AG04450 (cell line): ENCODE measurements at regions of chr12 and their contacts with region 1.

Region 1: DNA sequence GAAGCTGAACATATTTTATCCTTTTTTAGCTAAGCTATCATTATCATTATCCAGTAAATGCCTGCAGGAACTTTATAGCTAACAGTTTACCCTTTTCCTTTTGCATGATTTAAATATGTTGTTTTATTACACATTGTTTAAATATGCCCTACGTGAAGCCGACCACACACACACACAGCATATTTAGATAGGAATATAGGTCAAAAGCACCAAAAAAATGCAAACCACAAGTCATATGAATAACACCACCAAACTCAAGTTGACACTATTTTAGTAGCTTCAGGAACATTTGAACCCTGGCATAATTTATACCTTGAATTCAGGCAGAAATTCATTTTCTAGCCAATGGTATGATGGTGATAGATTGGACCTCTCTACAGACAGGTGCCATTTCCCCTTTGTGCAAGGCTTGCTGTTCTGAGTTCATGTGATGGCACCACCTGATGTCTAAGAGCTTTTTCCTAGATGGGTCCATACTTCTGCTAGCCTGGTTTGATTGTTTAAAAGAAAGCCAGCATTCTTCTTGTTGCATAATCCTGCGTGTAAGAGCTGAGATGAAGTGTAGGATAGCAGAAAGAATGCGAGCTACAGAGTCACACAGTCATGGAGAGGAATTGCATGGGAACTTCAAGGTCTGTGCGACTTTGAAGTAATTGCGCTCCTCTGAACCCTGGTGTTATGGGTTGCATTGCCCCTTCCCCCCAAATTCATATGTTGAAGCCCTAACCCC is 454.8 kb upstream of the SOX5 start:
- DNase-seq: peak; percentile 52
- H3K4me3 ChIP-seq: no peak overlapping the region
- H3K27ac ChIP-seq: peak overlapping the region; percentile 43
- H3K27me3 ChIP-seq: no peaks in the 10 kb centered on the region
- CTCF ChIP-seq: no peak

Region 2: DNA sequence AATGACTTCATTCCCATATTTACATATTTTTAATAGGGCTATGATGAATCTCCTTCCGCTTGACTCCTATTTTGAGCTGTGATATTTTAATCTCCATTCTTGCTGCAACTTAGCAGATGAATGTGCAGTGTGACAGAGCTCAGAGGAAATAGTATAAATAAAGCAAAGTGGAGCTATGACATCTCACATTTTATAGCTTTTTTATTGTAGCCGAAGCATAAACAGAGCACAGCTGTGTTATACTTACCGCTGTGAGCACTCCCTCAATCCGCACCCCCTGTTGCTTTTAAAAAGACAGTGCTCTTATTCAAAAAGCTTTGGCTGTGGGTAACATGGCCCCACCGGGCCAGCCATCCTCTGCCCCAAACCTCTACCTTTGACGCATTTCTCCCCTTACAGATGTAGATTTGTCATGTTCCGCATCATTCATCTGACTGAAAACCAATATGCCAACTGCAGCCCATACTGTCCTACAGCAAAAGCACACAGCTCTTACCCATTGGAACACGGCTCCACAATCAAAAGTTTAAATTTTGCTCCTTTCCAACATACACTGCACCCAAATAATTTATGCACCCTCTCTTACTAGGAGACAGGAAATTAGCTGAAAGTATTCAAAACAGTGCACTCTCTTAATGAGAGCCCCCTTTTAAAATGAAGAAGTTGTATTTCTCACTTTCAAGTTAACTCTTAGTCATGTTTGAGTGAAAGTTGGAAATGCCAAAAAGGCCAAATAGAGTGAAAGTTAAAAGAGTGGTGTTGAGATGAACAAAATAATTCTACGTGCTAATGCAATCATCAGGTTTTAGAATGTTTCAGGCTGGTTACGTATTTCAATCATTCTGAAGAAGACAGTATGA is 25.5 kb before region 1 on chr12:
- CTCF ChIA-PET with region 1: no interaction called
- POLR2A ChIA-PET with region 1: interaction called, 17 read pairs
- DNase-seq: peak; percentile 86
- H3K4me3 ChIP-seq: no peak overlapping the region
- H3K27ac ChIP-seq: no peak overlapping the region
- H3K27me3 ChIP-seq: no peaks in the 10 kb centered on the region
- CTCF ChIP-seq: no peak